AG04449 (cell line): ENCODE measurements at regions of chr4 and their contacts with region 1.

Region 1: DNA sequence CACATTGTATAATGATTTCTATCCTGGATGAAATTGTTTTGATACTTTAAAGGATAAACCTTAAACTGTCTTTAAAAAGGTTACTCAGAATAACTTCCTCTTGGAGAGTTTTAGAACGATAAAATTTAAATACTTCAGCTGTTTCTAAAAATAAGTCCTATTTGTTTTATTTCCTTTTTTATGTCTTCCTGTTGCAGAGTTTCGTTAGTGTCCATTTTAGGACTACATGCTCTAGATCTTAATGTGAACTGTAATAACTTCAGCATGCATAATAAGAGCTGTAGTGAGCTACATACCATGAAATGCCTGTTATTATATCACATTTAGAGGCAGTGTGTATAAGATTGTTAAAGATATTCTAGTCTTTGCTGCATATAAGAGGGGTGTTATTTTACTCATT is 14.6 kb downstream of the ATP10D start:
- DNase-seq: peak; percentile 62
- H3K4me3 ChIP-seq: no peak overlapping the region
- CTCF ChIP-seq: no peak

Region 2: DNA sequence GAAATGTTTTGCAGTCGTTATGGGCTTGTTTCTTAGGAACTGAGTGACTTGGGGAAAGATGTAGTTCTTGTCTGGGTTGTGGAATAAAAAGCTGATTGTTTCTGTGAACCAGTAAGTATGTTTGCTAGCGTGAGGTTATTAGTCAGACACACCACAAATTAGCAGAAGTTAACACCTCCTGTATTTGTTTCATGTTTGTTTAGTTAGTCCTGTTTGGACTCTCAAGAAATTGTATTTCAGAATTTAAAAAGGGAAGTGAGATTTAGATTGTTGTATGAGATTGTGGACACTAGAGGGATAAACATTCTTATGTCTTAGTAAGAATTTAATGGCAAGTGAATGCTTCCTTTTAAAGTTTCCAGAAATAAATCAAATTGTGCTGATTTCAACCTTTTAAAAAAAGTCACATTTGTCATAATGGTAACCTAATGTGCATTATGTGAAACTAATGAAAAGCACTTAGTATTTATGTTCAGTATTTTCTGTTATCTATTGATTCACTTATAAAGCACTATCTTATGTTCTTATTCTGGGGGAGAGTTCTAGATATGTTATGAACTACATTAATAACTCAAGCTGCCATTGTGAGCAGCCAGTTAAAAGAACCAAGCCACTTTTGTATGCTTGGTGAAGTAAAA is 10.9 kb after region 1 on chr4:
- CTCF ChIA-PET with region 1: interaction called, 17 read pairs
- POLR2A ChIA-PET with region 1: no interaction called
- DNase-seq: no peak
- H3K4me3 ChIP-seq: no peak overlapping the region
- CTCF ChIP-seq: no peak

Region 3: DNA sequence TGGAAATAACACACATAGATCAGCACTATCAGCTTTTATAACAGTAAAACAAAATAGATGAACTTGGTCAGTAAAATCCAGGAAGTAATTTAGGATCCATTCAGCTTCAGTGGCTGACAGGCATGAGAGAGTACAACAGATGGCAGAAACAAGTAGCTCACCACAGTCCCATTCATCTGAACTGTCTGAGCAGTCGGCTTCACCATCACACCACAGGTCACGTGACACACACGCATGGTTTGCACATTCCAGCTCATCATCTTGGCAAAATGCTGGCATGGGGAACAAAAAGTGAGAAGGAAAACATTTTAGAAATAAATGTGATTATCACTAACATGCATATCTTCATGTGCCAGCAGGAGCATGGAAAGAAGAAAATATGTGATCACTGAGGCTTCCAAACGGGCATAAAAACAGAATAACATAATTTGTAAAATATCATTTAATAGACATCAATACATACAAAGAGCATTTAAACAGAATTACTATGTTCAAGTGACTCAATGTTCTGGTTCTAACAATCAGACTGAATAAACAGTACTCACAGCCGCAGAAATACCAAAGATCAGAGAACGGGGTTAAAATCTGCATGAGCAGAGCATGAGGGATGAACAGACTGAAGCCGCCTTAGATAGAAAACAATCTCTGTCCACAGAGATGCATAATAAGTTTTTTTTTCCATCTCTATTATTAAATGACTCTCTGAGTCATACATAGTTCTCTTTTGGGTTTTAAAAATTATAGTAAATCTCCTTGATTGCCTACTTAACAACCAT is 143.5 kb after region 1 on chr4:
- CTCF ChIA-PET with region 1: no interaction called
- POLR2A ChIA-PET with region 1: no interaction called
- DNase-seq: no peak
- H3K4me3 ChIP-seq: no peak overlapping the region
- CTCF ChIP-seq: no peak